ENCODE measurements at regions of chr7 and their contacts with region 1.

Region 1: GRCh38 chr7:24907311-24907886 is 72.6 kb downstream of the OSBPL3 start:
- DNase-seq: peak; percentile 44
- ATAC-seq: peak; percentile 74
- H3K4me3 ChIP-seq: peak overlapping the region; percentile 4; the same call in 1 of the 2 replicates
- H3K27ac ChIP-seq: peak overlapping the region; percentile 80
- H3K4me1 ChIP-seq: peaks cover 51% of the 10 kb centered on the region
- H3K27me3 ChIP-seq: no peaks in the 10 kb centered on the region
- CTCF ChIP-seq: no peak
- EP300 ChIP-seq: no peak
- POLR2A ChIP-seq: no peak
- RAD21 ChIP-seq: 0 out of 2 replicates have a peak, but pooled peaks have one; percentile 7

Region 2: DNA sequence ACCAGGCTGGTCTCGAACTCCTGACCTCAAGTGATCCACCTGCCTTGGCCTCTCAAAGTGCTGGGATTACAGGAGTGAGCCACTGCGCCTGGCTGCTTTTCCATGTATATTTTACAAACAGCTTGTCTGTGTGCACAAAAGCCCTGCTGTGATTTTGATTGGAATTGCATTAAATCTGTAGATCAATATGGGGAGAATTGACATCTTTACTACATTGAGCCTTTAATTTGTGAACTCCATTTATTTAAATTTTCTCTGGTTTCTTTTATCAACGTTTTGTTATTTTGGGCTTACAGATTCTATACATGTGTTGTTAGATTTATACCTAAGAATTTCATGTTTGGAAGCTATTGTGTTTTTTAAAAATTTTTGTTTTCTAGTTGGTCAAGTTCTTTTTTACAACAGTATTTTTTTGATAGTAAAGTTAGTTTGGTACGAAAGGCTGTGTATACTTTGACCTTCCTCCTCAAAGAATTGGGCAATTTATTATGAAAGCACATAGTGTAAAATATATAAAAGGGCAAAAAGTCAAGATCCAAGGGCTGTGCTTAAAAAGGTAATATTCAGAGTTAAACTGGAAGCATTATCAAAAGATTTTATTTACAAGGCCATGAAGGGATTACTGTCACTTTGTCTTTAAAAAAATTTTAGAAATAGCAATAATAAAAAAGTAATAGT is 1104.5 kb before region 1 on chr7:
- CTCF ChIA-PET with region 1: no interaction called
- POLR2A ChIA-PET with region 1: no interaction called
- RAD21 ChIA-PET with region 1: no interaction called
- SMC1A ChIA-PET with region 1: no interaction called
- in situ Hi-C with region 1: no loop called
- intact Hi-C with region 1: no loop called
- DNase-seq: no peak
- ATAC-seq: no peak
- H3K4me3 ChIP-seq: no peak overlapping the region
- H3K27ac ChIP-seq: no peak overlapping the region
- H3K4me1 ChIP-seq: no peaks in the 10 kb centered on the region
- H3K27me3 ChIP-seq: no peaks in the 10 kb centered on the region
- CTCF ChIP-seq: no peak
- EP300 ChIP-seq: no peak
- POLR2A ChIP-seq: no peak
- RAD21 ChIP-seq: no peak

Region 3: GRCh38 chr7:24877790-24878311 is 29.5 kb before region 1 on chr7:
- CTCF ChIA-PET with region 1: interaction called, 3 read pairs
- POLR2A ChIA-PET with region 1: interaction called, 8 read pairs
- RAD21 ChIA-PET with region 1: no interaction called
- SMC1A ChIA-PET with region 1: interaction called, 13 read pairs
- in situ Hi-C with region 1: no loop called
- intact Hi-C with region 1: no loop called
- DNase-seq: peak; percentile 62
- ATAC-seq: peak; percentile 88
- H3K4me3 ChIP-seq: no peak overlapping the region; the same call in 1 of the 2 replicates
- H3K27ac ChIP-seq: peak overlapping the region; percentile 5; the same call in 1 of the 2 replicates
- H3K4me1 ChIP-seq: peaks cover 16% of the 10 kb centered on the region
- H3K27me3 ChIP-seq: no peaks in the 10 kb centered on the region
- CTCF ChIP-seq: no peak
- EP300 ChIP-seq: no peak
- POLR2A ChIP-seq: no peak
- RAD21 ChIP-seq: no peak

Region 4: GRCh38 chr7:24896031-24896501 is 11.3 kb before region 1 on chr7:
- CTCF ChIA-PET with region 1: interaction called, 13 read pairs
- POLR2A ChIA-PET with region 1: interaction called, 29 read pairs
- RAD21 ChIA-PET with region 1: interaction called, 22 read pairs
- SMC1A ChIA-PET with region 1: interaction called, 93 read pairs
- in situ Hi-C with region 1: no loop called
- intact Hi-C with region 1: no loop called
- DNase-seq: peak; percentile 52
- ATAC-seq: peak; percentile 70
- H3K4me3 ChIP-seq: no peak overlapping the region
- H3K27ac ChIP-seq: peak overlapping the region; percentile 75
- H3K4me1 ChIP-seq: peaks cover 57% of the 10 kb centered on the region
- H3K27me3 ChIP-seq: no peaks in the 10 kb centered on the region
- CTCF ChIP-seq: peak in 1 of 3 experiments; percentile 45; a peak in 2 of 6 replicates
- EP300 ChIP-seq: peak; percentile 55 to 79; a peak in 3 of 4 replicates
- POLR2A ChIP-seq: no peak
- RAD21 ChIP-seq: peak; percentile 40; the same call in 1 of the 2 replicates

Region 5: GRCh38 chr7:24917510-24918239 is 10.3 kb after region 1 on chr7:
- CTCF ChIA-PET with region 1: interaction called, 4 read pairs
- POLR2A ChIA-PET with region 1: interaction called, 3 read pairs
- RAD21 ChIA-PET with region 1: interaction called, 4 read pairs
- SMC1A ChIA-PET with region 1: interaction called, 93 read pairs
- in situ Hi-C with region 1: no loop called
- intact Hi-C with region 1: no loop called
- DNase-seq: no peak
- ATAC-seq: peak; percentile 66
- H3K4me3 ChIP-seq: peak overlapping the region; percentile 9; the same call in 1 of the 2 replicates
- H3K27ac ChIP-seq: peak overlapping the region; percentile 13
- H3K4me1 ChIP-seq: peaks cover 69% of the 10 kb centered on the region
- H3K27me3 ChIP-seq: no peaks in the 10 kb centered on the region
- CTCF ChIP-seq: no peak
- EP300 ChIP-seq: no peak
- POLR2A ChIP-seq: no peak
- RAD21 ChIP-seq: no peak

Region 6: DNA sequence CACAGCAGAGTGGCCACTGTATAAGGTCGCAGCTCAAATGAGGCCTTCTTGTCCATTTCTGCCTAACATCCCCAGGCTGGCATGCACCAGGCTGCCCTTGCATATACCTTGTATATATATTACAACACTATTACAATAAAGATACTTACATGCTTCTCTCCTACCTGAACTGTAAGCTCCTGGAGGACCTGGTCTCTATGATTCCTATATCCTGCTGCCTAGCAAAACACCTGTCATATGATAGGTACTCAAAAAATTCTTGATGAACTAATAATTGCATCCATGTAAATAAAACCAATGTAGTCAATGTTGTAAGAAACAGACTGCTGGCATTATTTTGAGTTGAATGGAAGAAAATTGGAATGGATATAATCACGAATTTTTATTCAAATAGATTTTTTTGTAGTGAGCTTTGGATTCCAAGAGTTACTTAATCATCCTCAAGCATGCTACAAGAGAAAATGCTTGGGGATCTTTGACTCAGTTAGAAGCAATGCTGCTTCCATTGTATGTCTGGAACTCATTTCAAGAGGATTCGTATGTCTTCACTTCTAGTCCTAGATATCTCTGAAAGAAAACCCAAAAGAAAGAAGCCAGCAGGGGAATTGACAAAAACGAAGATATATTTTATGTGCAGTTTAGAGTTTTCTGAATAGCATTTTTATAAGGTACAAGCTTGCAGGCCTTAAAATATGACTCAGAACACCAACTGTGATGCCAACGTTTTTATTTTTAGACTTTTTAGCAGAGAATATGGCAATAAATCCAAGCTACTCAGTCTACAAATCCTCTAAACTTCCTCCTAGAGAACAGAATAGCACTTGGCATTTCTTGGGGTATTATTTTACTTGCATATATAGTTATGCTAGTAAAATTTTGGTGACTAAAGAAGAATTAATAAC is 19.5 kb after region 1 on chr7:
- CTCF ChIA-PET with region 1: interaction called, 3 read pairs
- POLR2A ChIA-PET with region 1: interaction called, 3 read pairs
- RAD21 ChIA-PET with region 1: interaction called, 4 read pairs
- SMC1A ChIA-PET with region 1: interaction called, 10 read pairs
- in situ Hi-C with region 1: no loop called
- intact Hi-C with region 1: no loop called
- DNase-seq: no peak
- ATAC-seq: no peak
- H3K4me3 ChIP-seq: no peak overlapping the region
- H3K27ac ChIP-seq: no peak overlapping the region
- H3K4me1 ChIP-seq: peaks cover 4% of the 10 kb centered on the region
- H3K27me3 ChIP-seq: no peaks in the 10 kb centered on the region
- CTCF ChIP-seq: no peak
- EP300 ChIP-seq: no peak
- POLR2A ChIP-seq: no peak
- RAD21 ChIP-seq: no peak

Region 7: GRCh38 chr7:24995466-24995865 is 88.1 kb after region 1 on chr7:
- CTCF ChIA-PET with region 1: no interaction called
- POLR2A ChIA-PET with region 1: no interaction called
- RAD21 ChIA-PET with region 1: no interaction called
- SMC1A ChIA-PET with region 1: no interaction called
- in situ Hi-C with region 1: no loop called
- intact Hi-C with region 1: no loop called
- DNase-seq: no peak
- ATAC-seq: peak; percentile 57
- H3K4me3 ChIP-seq: no peak overlapping the region
- H3K27ac ChIP-seq: no peak overlapping the region
- H3K4me1 ChIP-seq: no peaks in the 10 kb centered on the region
- H3K27me3 ChIP-seq: no peaks in the 10 kb centered on the region
- CTCF ChIP-seq: no peak
- EP300 ChIP-seq: no peak
- POLR2A ChIP-seq: no peak
- RAD21 ChIP-seq: no peak

Region 8: GRCh38 chr7:25951031-25951948 is 1043.9 kb after region 1 on chr7:
- CTCF ChIA-PET with region 1: no interaction called
- POLR2A ChIA-PET with region 1: no interaction called
- RAD21 ChIA-PET with region 1: no interaction called
- SMC1A ChIA-PET with region 1: no interaction called
- in situ Hi-C with region 1: loop called (anchors 25 kb)
- intact Hi-C with region 1: no loop called
- DNase-seq: peak; percentile 69
- ATAC-seq: peak; percentile 89
- H3K4me3 ChIP-seq: peak overlapping the region; percentile 86
- H3K27ac ChIP-seq: peak overlapping the region; percentile 49
- H3K4me1 ChIP-seq: peaks cover 23% of the 10 kb centered on the region
- H3K27me3 ChIP-seq: no peaks in the 10 kb centered on the region
- CTCF ChIP-seq: no peak
- EP300 ChIP-seq: no peak
- POLR2A ChIP-seq: peak; percentile 68
- RAD21 ChIP-seq: no peak